ENCODE measurements at regions of chr17 and their contacts with region 1.

Region 1: GRCh38 chr17:50719144-50719923 is at the start of gene LUC7L3:
- DNase-seq: peak; percentile 95 to 98
- ATAC-seq: peak; percentile 92 to 95
- H3K4me3 ChIP-seq: peak within 1 kb of the TSS; percentile 66
- H3K27ac ChIP-seq: peak within 1 kb of the TSS; percentile 85 to 95
- H3K4me1 ChIP-seq: peaks cover 33% of the 10 kb centered on the region
- CTCF ChIP-seq: no peak
- EP300 ChIP-seq: no peak
- POLR2A ChIP-seq: peak; percentile 80
- RAD21 ChIP-seq: no peak
- polyA plus RNA-seq, gene LUC7L3: 117 and 209 TPM in 2 replicates

Region 2: GRCh38 chr17:50541716-50542688 is 177.3 kb before region 1 on chr17:
- CTCF ChIA-PET with region 1: interaction called, 3 read pairs
- POLR2A ChIA-PET with region 1: interaction called, 13 read pairs
- DNase-seq: peak; percentile 80 to 96
- ATAC-seq: peak; percentile 71 to 85
- H3K4me3 ChIP-seq: peak overlapping the region; percentile 51
- H3K27ac ChIP-seq: peak overlapping the region; percentile 85 to 90
- H3K4me1 ChIP-seq: peaks cover 45% of the 10 kb centered on the region
- CTCF ChIP-seq: peak; percentile 28; the same call in 1 of the 3 replicates
- EP300 ChIP-seq: no peak
- POLR2A ChIP-seq: peak; percentile 92
- RAD21 ChIP-seq: peak in 1 of 2 experiments; percentile 22; a peak in 1 of 5 replicates

Region 3: GRCh38 chr17:50691545-50692447 is 27.5 kb before region 1 on chr17:
- CTCF ChIA-PET with region 1: interaction called, 40 read pairs
- POLR2A ChIA-PET with region 1: interaction called, 10 read pairs
- DNase-seq: peak in 1 of 2 experiments; percentile 77
- ATAC-seq: peak in 1 of 2 experiments; percentile 2; a peak in 3 of 6 replicates
- H3K4me3 ChIP-seq: 0 out of 3 replicates have a peak overlapping the region, but pooled peaks have one; percentile 1
- H3K27ac ChIP-seq: peak overlapping the region; percentile 97 to 98
- H3K4me1 ChIP-seq: peaks cover 98% of the 10 kb centered on the region
- CTCF ChIP-seq: no peak
- EP300 ChIP-seq: no peak
- POLR2A ChIP-seq: no peak
- RAD21 ChIP-seq: no peak; a peak in 1 of 5 replicates

Region 4: DNA sequence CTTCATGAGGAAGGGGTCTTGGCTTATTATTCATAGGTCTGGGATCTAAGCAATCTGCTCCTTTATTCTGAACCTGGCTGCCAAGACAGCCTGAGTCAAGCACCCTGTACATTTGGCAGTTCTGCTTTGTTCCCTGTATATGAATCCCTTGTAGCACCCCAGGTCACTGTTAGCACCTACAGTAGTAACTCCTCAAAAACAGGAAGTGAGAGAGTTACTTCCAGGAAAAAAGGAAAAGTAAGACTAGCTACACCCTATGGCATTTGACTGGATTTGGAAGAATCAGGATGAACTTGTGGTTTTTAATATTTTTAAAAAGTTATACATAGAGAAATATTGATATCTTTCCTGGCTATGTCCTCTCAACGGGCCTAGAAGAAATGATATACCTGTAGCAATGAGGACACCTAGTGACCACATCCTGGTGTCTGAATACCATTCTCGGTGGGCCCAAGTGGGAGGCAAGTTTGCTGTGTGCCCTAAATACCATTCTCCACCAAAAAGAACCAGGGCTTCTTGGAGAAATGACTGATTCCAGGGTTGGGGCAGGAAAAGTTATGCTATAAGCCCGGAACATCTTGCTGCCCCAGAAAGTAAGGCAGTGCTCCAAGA is 21.6 kb before region 1 on chr17:
- CTCF ChIA-PET with region 1: interaction called, 40 read pairs
- POLR2A ChIA-PET with region 1: interaction called, 14 read pairs
- DNase-seq: peak in 1 of 2 experiments; percentile 61
- ATAC-seq: no peak
- H3K4me3 ChIP-seq: no peak overlapping the region
- H3K27ac ChIP-seq: peak overlapping the region; percentile 97 to 98
- H3K4me1 ChIP-seq: peaks cover 98% of the 10 kb centered on the region
- CTCF ChIP-seq: peak; percentile 64
- EP300 ChIP-seq: no peak
- POLR2A ChIP-seq: no peak
- RAD21 ChIP-seq: peak; percentile 79 to 80

Region 5: DNA sequence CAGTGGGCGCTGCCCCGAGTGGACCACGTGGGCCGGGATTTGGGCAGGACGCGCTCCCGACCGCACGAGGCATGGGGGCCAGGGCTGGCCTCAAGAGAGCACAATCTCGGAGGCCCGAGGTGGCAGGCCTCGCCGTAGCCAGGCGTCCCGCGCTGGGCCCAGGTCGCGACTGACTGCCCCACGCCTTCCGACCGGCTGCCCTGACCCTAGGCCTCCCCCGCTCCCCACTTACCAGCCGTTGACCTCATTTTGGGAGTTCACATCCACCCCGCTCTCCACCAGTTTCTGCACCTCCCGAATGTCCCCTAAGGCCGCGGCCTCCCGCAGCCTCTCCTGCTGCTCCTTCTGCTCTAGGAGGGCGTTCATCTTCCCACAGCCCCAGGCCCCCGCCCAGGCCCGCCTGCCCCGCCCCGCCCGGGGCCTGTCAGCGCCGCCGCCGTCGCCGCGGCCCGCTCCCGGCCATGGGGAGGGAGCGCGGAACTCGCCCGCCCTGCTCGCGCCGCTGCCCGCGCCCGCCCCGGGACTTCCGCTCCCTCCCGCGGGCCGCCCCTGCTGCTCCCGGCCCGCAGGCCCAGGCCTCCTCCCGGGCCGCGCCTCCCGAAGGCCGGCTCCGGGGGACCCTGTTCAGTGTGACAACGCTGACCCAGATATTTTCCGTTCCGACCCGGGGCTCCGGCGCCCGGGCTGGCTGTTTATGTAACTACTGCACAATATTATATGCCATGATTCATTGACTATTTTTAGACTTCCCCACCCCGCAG is 11.9 kb before region 1 on chr17 and contains the start of gene ANKRD40:
- CTCF ChIA-PET with region 1: interaction called, 4 read pairs
- POLR2A ChIA-PET with region 1: interaction called, 23 read pairs
- DNase-seq: peak; percentile 96
- ATAC-seq: peak; percentile 81 to 88
- H3K4me3 ChIP-seq: peak within 1 kb of the TSS; percentile 65
- H3K27ac ChIP-seq: peak within 1 kb of the TSS; percentile 96 to 98
- H3K4me1 ChIP-seq: peaks cover 38% of the 10 kb centered on the region
- CTCF ChIP-seq: no peak
- EP300 ChIP-seq: peak; percentile 17 to 36; a peak in 1 of 5 replicates
- POLR2A ChIP-seq: peak; percentile 50
- RAD21 ChIP-seq: no peak
- polyA plus RNA-seq, gene ANKRD40: 68.5 and 84.3 TPM in 2 replicates

Measured in A549 (cell line).